ENCODE measurements at regions of chr4 and their contacts with region 1.

Region 1: DNA sequence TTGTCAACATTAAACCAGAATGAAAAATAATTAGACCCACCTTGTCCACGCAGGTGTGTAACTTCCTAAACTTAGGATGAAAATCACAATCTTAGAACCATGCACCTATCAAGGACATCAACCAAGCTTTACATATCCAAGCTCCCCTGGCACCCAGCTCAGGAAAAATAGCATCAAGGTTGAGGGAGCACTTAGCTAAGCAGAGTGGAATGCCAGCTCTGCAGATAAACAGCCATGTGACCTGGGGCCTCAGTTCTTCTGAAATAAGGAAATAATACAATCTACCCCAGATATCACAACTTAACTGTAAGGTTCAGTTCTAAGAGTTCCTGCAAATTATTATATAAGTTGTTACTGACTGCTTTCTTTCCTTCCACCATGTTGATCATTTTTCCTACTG is 64.7 kb downstream of the DHX15 start:
- DNase-seq: no peak
- H3K4me3 Mint-ChIP-seq: no peak overlapping the region
- H3K27ac Mint-ChIP-seq: no peak overlapping the region
- H3K4me1 Mint-ChIP-seq: peaks cover 12% of the 10 kb centered on the region
- H3K27me3 Mint-ChIP-seq: no peaks in the 10 kb centered on the region

Region 2: DNA sequence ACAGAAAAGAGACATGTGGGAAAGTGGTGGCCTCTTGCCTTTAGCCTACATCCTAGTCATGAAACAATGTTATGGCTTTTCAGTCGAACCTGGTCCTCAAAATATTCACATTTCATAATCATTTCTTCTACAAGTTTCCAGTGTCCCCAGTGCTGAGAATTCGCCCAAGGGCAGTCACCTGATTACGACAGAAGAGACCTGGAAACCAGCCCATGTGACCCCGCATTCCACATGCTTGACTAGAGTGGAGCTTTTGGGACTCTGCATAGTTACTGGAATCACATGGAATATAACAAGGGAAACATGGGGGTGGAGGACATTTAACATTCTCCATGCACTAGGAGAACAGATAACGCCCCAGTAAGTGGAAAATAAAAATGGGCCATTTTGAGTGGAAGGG is 729.9 kb before region 1 on chr4:
- intact Hi-C with region 1: no loop called
- DNase-seq: no peak
- H3K4me3 Mint-ChIP-seq: no peak overlapping the region
- H3K27ac Mint-ChIP-seq: no peak overlapping the region
- H3K4me1 Mint-ChIP-seq: no peaks in the 10 kb centered on the region
- H3K27me3 Mint-ChIP-seq: no peaks in the 10 kb centered on the region

Region 3: GRCh38 chr4:24489870-24490269 is 29.8 kb before region 1 on chr4:
- intact Hi-C with region 1: no loop called
- DNase-seq: no peak
- H3K4me3 Mint-ChIP-seq: no peak overlapping the region
- H3K27ac Mint-ChIP-seq: no peak overlapping the region
- H3K4me1 Mint-ChIP-seq: peaks cover 5% of the 10 kb centered on the region
- H3K27me3 Mint-ChIP-seq: peaks cover 23% of the 10 kb centered on the region

Region 4: GRCh38 chr4:24557026-24558025 is 37.7 kb after region 1 on chr4:
- intact Hi-C with region 1: loop called (anchors 5 kb)
- DNase-seq: no peak
- H3K4me3 Mint-ChIP-seq: peak overlapping the region; percentile 60
- H3K27ac Mint-ChIP-seq: peak overlapping the region; percentile 44
- H3K4me1 Mint-ChIP-seq: peaks cover 51% of the 10 kb centered on the region
- H3K27me3 Mint-ChIP-seq: no peaks in the 10 kb centered on the region

Region 5: GRCh38 chr4:24598026-24598425 is 78.4 kb after region 1 on chr4:
- intact Hi-C with region 1: no loop called
- DNase-seq: no peak
- H3K4me3 Mint-ChIP-seq: no peak overlapping the region
- H3K27ac Mint-ChIP-seq: no peak overlapping the region
- H3K4me1 Mint-ChIP-seq: no peaks in the 10 kb centered on the region
- H3K27me3 Mint-ChIP-seq: peaks cover 3% of the 10 kb centered on the region

Measured in activated CD4-positive, alpha-beta T cell treated with anti-CD3 and anti-CD28 coated beads, Interleukin-2, amount 10 ng/mL, durations not matched to agents 24 days and 14 days (primary cell).